Prostate gland (tissue), 2 donors: ENCODE measurements at regions of chr1 and their contacts with region 1.

Region 1: GRCh38 chr1:108828022-108828961 is 28.6 kb downstream of the AKNAD1 start:
- DNase-seq: peak; percentile 82
- H3K4me3 ChIP-seq: no peak overlapping the region
- H3K27ac ChIP-seq: peak overlapping the region; percentile 42 to 54
- H3K4me1 ChIP-seq: peaks cover 6% of the 10 kb centered on the region
- H3K27me3 ChIP-seq: no peaks in the 10 kb centered on the region
- CTCF ChIP-seq: peak; percentile 74 to 87 (median 80)
- POLR2A ChIP-seq: no peak

Region 2: GRCh38 chr1:108691942-108692723 is 136.2 kb before region 1 on chr1 and contains the start of gene PRPF38B:
- intact Hi-C with region 1: loop called (anchors 5 kb)
- DNase-seq: peak; percentile 94
- H3K4me3 ChIP-seq: peak within 1 kb of the TSS; percentile 76 to 84
- H3K27ac ChIP-seq: peak within 1 kb of the TSS; percentile 98 to 99
- H3K4me1 ChIP-seq: no peaks in the 10 kb centered on the region
- H3K27me3 ChIP-seq: no peaks in the 10 kb centered on the region
- CTCF ChIP-seq: peak in 1 of 4 experiments; percentile 9
- POLR2A ChIP-seq: peak; percentile 84
- total RNA-seq, gene PRPF38B: 18.9 to 24.2 TPM

Region 3: DNA sequence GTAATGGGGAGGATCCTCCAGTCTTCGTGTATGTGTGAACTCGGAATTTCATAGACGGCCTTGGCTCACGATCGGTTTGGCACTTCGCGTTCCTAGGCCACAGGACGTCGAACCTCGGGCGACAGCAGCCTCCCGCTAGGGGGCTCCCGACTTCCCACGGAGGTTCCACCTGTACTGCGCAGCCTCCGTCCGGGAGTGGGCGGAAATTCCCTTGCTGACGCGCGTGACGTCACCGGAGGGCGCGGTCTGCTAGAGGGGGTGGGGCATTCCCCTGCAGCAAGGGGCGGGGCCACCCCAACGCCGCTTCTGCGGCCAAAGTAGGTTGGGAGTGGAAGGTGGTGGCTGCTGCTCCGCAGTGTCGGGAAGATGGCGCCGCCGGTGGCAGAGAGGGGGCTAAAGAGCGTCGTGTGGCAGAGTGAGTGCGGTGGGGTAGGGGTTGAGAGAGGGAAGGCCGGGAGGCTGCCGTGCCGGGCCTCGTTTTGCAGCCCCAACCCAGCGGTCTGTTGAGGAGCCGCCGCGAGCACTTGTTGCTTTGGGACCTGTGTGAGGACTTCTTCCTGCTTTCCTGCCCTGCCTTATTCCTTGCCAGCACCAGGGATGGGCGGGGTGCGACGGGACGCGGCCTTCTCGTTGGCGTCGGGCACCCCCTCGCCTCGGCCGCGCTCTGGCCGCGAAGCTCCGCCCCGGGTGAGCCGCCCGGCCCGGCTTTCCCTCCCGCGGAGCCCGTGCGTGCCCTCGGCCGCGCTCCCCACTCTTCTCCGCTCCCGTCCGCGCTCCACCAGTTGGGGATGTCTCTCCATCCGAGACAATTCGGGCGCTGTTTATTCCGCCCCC is 81.7 kb before region 1 on chr1 and contains the start of gene STXBP3:
- intact Hi-C with region 1: no loop called
- DNase-seq: peak; percentile 97
- H3K4me3 ChIP-seq: peak within 1 kb of the TSS; percentile 91 to 94
- H3K27ac ChIP-seq: peak within 1 kb of the TSS; percentile 98 to 99
- H3K4me1 ChIP-seq: no peaks in the 10 kb centered on the region
- H3K27me3 ChIP-seq: no peaks in the 10 kb centered on the region
- CTCF ChIP-seq: peak; percentile 93 to 98 (median 97)
- POLR2A ChIP-seq: peak; percentile 100
- total RNA-seq, gene STXBP3: 41.1 to 55.4 TPM

Region 4: GRCh38 chr1:108877348-108878159 is 49.3 kb after region 1 on chr1:
- intact Hi-C with region 1: loop called (anchors 2 kb)
- DNase-seq: no peak
- H3K4me3 ChIP-seq: peak overlapping the region; percentile 85 to 94
- H3K27ac ChIP-seq: peak overlapping the region; percentile 73 to 81
- H3K4me1 ChIP-seq: no peaks in the 10 kb centered on the region
- H3K27me3 ChIP-seq: no peaks in the 10 kb centered on the region
- CTCF ChIP-seq: no peak
- POLR2A ChIP-seq: no peak

Region 5: GRCh38 chr1:108897865-108898720 is 69.8 kb after region 1 on chr1:
- intact Hi-C with region 1: loop called (anchors 1 kb)
- DNase-seq: peak; percentile 29
- H3K4me3 ChIP-seq: no peak overlapping the region
- H3K27ac ChIP-seq: no peak overlapping the region
- H3K4me1 ChIP-seq: no peaks in the 10 kb centered on the region
- H3K27me3 ChIP-seq: no peaks in the 10 kb centered on the region
- CTCF ChIP-seq: peak; percentile 12 to 81 (median 72)
- POLR2A ChIP-seq: no peak